Endothelial cell of umbilical vein (primary cell): ENCODE measurements at regions of chr11 and their contacts with region 1.

Region 1: GRCh38 chr11:75562048-75562835 is at the start of gene SERPINH1:
- DNase-seq: peak; percentile 71
- H3K4me3 ChIP-seq: peak within 1 kb of the TSS; percentile 50 to 84 (median 66)
- H3K27ac ChIP-seq: peak within 1 kb of the TSS; percentile 92
- H3K4me1 ChIP-seq: peaks cover 54% of the 10 kb centered on the region
- H3K27me3 ChIP-seq: no peaks in the 10 kb centered on the region
- CTCF ChIP-seq: no peak
- POLR2A ChIP-seq: peak; percentile 86
- total RNA-seq, gene SERPINH1: 384 and 409 TPM in 2 replicates

Region 2: DNA sequence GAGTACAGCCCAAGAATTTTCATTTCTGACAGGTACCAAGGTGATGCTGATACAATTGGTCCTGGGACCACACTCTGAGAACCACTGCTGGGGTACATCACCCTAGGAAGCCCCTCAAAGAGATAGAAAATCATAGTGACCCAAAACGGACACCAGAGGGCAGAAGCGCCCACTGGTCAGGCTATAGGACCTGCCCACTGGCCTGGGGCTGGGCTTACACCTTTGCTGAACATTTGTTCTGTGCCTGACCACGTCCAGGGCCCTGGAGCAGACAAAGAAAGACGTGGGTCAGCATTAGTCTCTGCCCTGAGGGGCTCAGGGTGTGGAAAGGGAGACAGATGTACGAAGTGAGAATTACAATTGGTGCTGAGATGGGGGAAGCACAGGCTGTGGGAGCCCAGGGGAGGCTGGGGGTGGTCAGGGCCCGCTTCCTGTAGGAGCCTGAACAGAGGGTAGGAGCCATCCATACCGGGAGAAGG is 14.6 kb before region 1 on chr11:
- CTCF ChIA-PET with region 1: interaction called, 43 read pairs
- POLR2A ChIA-PET with region 1: no interaction called
- dilution Hi-C with region 1: no loop called
- intact Hi-C with region 1: loop called (anchors 1 kb)
- DNase-seq: peak; percentile 77
- H3K4me3 ChIP-seq: no peak overlapping the region
- H3K27ac ChIP-seq: no peak overlapping the region
- H3K4me1 ChIP-seq: no peaks in the 10 kb centered on the region
- H3K27me3 ChIP-seq: peaks cover 0 to 2% of the 10 kb centered on the region in 2 experiments
- CTCF ChIP-seq: peak; percentile 81 to 82
- POLR2A ChIP-seq: peak; percentile 7

Region 3: DNA sequence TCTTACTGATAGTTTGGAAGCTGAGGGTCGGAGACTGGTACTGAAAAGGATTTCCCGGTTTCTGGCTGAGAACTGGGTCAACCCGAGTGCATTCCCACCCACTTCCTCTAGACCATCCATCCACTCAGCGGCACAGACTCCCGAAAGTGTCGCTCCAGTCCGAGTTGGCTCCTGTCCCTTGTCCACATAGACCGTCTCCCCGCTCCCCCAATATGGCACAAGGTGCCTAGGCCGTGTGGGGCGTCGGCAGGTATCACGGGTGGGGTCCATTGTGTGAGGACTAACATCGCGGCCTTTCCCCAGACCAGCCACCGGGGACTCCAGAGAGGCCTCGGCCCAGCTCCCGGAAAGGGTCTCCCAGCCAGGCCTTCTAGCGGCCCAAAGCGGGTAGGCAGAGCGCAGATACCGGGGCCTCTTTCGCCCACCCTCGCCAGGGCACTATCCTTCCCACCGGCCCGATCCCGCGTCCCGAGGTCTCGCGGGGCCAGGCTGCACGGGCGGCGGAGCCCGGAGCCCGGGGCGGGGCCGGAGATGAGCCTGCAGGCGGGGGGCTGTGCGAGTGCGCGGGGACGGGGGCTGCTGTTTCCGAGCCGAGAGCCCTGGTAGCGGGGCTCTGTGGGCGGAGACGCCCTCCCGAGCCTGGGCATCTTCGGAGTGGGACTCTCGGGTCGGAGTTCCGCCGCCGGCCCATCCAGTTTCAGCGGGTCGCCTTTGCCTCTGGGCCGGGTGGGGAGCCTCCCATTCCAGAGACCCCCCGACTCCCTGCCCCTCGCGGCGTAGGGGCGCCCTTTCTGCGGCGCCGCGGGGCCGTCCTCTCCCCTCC is 20.9 kb after region 1 on chr11:
- CTCF ChIA-PET with region 1: interaction called, 107 read pairs
- POLR2A ChIA-PET with region 1: interaction called, 3 read pairs
- dilution Hi-C with region 1: no loop called
- intact Hi-C with region 1: loop called (anchors 1 kb)
- DNase-seq: peak; percentile 84
- H3K4me3 ChIP-seq: peak overlapping the region; percentile 17 to 62 (median 38)
- H3K27ac ChIP-seq: peak overlapping the region; percentile 94
- H3K4me1 ChIP-seq: peaks cover 21% of the 10 kb centered on the region
- H3K27me3 ChIP-seq: no peaks in the 10 kb centered on the region
- CTCF ChIP-seq: peak; percentile 9 to 20
- POLR2A ChIP-seq: peak; percentile 69

Region 4: DNA sequence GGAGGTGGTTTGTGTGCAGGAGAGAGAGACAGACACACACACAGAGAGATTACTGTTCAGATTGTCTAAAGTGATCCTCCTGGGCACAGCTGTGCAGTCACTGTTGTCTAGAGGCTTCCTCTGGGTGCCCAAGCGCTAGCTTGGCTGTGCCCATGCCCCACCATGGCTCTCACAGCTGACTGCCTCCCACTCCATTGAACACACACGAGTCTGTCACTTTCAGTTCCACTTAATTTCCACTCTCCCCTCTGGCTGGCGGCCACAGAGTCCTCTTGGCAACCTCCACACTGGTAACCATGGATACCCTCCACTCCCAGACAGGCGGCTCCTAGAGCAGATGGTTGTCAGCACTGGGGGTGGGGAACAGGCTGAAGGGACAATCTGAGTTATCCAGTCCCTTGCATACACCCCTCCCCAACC is 77.5 kb after region 1 on chr11:
- CTCF ChIA-PET with region 1: no interaction called
- POLR2A ChIA-PET with region 1: no interaction called
- dilution Hi-C with region 1: no loop called
- intact Hi-C with region 1: no loop called
- DNase-seq: peak; percentile 60
- H3K4me3 ChIP-seq: no peak overlapping the region
- H3K27ac ChIP-seq: no peak overlapping the region
- H3K4me1 ChIP-seq: no peaks in the 10 kb centered on the region
- H3K27me3 ChIP-seq: peaks cover 18 to 30% of the 10 kb centered on the region in 2 experiments
- CTCF ChIP-seq: no peak
- POLR2A ChIP-seq: no peak